ENCODE measurements at regions of chr9 and their contacts with region 1.

Region 1: GRCh38 chr9:127916665-127917613 is at the start of gene ST6GALNAC4:
- DNase-seq: peak; percentile 95
- ATAC-seq: peak; percentile 82
- H3K4me3 ChIP-seq: peak within 1 kb of the TSS; percentile 71 to 99 (median 79)
- H3K4me3 Mint-ChIP-seq: peak within 1 kb of the TSS; percentile 94
- H3K27ac ChIP-seq: peak within 1 kb of the TSS; percentile 89 to 91
- H3K27ac Mint-ChIP-seq: peak within 1 kb of the TSS; percentile 98
- H3K4me1 ChIP-seq: peaks cover 44 to 77% of the 10 kb centered on the region in 2 donors
- H3K4me1 Mint-ChIP-seq: peaks cover 68% of the 10 kb centered on the region
- H3K27me3 ChIP-seq: peaks cover 0 to 2% (median 0%) of the 10 kb centered on the region in 4 experiments
- H3K27me3 Mint-ChIP-seq: no peaks in the 10 kb centered on the region
- CTCF ChIP-seq: no peak
- total RNA-seq, gene ST6GALNAC4: 198 and 199 TPM in 2 replicates

Region 2: DNA sequence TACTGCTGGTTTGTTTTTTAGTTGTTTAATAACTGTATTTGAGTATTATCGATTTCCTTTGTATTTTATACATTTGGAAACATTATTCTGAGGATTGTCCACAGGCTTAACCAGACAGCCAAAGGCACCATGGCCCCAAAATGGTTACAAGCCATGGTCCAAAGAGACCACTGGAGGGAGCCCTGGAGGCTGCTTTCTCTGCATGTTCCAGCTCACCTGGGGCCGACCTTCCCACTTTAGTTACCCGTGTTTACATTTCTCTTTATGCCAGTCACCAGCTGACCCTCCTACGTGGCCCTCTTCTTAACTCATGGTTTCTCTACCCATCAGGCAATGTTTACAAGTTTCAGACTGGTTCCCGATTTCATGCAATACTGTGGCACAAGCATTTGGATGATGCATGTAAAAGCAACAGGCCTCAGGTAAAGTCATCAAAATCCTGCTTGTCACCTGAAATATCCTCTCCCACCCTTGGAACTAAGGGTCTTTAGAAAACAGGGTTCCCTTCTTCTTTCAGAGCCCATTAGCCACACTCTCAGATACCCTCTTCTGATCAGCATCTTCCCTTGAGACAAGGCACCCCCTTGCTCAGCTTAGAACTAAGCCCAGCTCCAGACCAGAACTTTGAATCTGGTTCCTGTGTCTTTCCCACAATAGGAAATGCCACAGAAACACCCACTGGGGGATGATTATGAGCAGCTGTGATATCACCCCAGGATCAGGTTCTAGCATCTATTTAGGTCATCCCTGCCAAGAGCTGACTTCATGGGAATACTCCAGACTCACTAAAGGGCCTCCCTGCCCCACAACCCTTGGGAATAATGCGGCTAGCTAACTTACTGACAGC is 702.3 kb before region 1 on chr9:
- CTCF ChIA-PET with region 1: interaction called, 5 read pairs
- POLR2A ChIA-PET with region 1: no interaction called
- intact Hi-C with region 1: loop called (anchors 5 kb)
- DNase-seq: peak; percentile 73
- ATAC-seq: peak; percentile 85
- H3K4me3 ChIP-seq: no peak overlapping the region
- H3K4me3 Mint-ChIP-seq: no peak overlapping the region
- H3K27ac ChIP-seq: no peak overlapping the region
- H3K27ac Mint-ChIP-seq: no peak overlapping the region
- H3K4me1 ChIP-seq: peaks cover 0 to 3% of the 10 kb centered on the region in 2 donors
- H3K4me1 Mint-ChIP-seq: peaks cover 4% of the 10 kb centered on the region
- H3K27me3 ChIP-seq: no peaks in the 10 kb centered on the region
- H3K27me3 Mint-ChIP-seq: no peaks in the 10 kb centered on the region
- CTCF ChIP-seq: peak; percentile 85

Region 3: GRCh38 chr9:127586537-127586936 is 330.4 kb before region 1 on chr9:
- CTCF ChIA-PET with region 1: interaction called, 80 read pairs
- POLR2A ChIA-PET with region 1: no interaction called
- intact Hi-C with region 1: loop called (anchors 5 kb)
- DNase-seq: peak; percentile 63
- ATAC-seq: peak; percentile 68
- H3K4me3 ChIP-seq: no peak overlapping the region
- H3K4me3 Mint-ChIP-seq: no peak overlapping the region
- H3K27ac ChIP-seq: no peak overlapping the region
- H3K27ac Mint-ChIP-seq: no peak overlapping the region
- H3K4me1 ChIP-seq: no peaks in the 10 kb centered on the region
- H3K4me1 Mint-ChIP-seq: no peaks in the 10 kb centered on the region
- H3K27me3 ChIP-seq: peaks cover 0 to 24% (median 7%) of the 10 kb centered on the region in 4 experiments
- H3K27me3 Mint-ChIP-seq: peaks cover 37% of the 10 kb centered on the region
- CTCF ChIP-seq: peak; percentile 63

Region 4: DNA sequence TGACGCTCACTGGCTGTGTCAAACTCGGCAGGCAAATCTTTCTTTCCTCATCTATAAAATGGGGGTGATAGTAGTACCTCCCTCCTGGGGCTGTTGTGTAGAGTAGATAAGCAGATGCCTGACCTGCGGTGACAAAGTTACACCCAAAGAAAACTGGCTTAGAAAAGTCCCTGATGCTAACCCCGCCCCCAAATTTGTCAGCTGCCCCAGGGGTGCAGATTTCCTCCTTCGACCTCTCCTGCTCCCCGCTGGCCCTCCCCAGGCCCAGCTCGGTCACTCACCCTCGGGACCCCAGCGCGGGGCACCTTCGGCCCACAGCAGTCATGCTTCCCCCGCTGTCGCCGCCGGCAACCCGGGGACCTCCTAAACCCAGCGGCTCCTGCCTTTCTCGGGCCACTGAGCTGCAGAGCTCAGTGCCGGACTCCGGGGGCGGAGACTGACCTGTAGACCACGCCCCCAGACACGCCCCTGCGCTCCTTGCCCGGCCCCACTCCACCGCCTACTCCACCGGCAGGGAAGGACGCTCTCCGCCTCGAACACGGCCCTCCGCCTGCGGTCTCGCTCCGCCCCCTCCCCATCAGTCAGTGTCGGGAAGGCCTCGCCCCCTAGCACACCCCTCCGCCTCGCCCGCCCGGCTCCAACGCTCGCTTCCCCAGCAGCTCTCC is 145.9 kb before region 1 on chr9:
- CTCF ChIA-PET with region 1: interaction called, 8 read pairs
- POLR2A ChIA-PET with region 1: interaction called, 12 read pairs
- intact Hi-C with region 1: loop called (anchors 1 kb)
- DNase-seq: peak; percentile 95
- ATAC-seq: peak; percentile 86
- H3K4me3 ChIP-seq: peak overlapping the region; percentile 43 to 73 (median 64)
- H3K4me3 Mint-ChIP-seq: peak overlapping the region; percentile 94
- H3K27ac ChIP-seq: peak overlapping the region; percentile 77 to 94
- H3K27ac Mint-ChIP-seq: peak overlapping the region; percentile 95
- H3K4me1 ChIP-seq: peaks cover 55 to 90% of the 10 kb centered on the region in 2 donors
- H3K4me1 Mint-ChIP-seq: peaks cover 68% of the 10 kb centered on the region
- H3K27me3 ChIP-seq: no peaks in the 10 kb centered on the region
- H3K27me3 Mint-ChIP-seq: no peaks in the 10 kb centered on the region
- CTCF ChIP-seq: no peak

Region 5: DNA sequence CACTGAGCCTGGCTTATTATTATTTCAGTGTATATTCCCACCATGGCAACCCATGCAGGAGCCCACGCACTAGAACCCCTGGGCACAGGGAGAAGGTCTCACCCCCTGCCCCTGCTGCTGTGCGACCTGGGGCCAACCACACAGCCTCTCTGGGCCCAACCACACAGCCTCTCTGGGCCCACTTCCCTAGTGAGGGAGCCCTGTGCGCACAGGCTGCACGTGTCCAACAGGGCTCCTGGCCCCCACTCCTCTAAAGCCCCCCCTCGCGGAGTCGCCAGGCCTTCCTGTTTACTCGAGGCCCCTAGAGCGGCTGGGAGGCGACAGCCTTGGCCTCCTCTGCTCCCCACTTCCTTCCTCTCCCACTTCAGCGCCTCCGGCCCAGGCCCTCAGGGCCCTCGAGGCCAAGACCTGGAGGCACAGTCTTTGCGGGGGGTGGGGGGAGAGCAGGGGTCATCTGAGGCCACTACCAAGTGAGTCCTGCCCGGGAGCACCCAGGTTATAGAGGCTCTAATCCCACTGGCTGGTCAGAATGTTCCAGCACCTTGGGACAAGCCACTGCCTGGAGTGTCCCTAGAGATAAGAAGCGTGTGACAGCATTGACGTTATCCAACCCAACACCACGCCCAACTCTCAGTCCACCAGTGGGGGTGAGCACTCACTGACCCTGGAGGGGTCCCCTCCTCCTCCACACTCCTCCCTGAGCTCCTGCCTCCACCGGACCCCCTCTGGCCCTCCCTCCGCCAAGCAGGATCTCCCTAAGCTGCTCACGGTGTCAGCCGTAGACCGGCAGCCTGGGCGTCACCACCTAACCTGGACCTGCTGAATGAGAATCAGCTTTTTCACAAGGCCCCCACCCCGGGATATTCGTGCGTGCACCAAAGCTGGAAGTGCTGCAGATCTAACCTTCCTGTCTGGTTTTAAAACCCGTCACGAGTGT is 54.6 kb before region 1 on chr9:
- CTCF ChIA-PET with region 1: interaction called, 237 read pairs
- POLR2A ChIA-PET with region 1: interaction called, 6 read pairs
- intact Hi-C with region 1: loop called (anchors 1 kb)
- DNase-seq: peak; percentile 87
- ATAC-seq: peak; percentile 77
- H3K4me3 ChIP-seq: no peak overlapping the region
- H3K4me3 Mint-ChIP-seq: peak overlapping the region; percentile 78
- H3K27ac ChIP-seq: peak overlapping the region; percentile 90 to 92
- H3K27ac Mint-ChIP-seq: peak overlapping the region; percentile 99
- H3K4me1 ChIP-seq: peaks cover 59 to 78% of the 10 kb centered on the region in 2 donors
- H3K4me1 Mint-ChIP-seq: peaks cover 64% of the 10 kb centered on the region
- H3K27me3 ChIP-seq: no peaks in the 10 kb centered on the region
- H3K27me3 Mint-ChIP-seq: no peaks in the 10 kb centered on the region
- CTCF ChIP-seq: no peak

Region 6: DNA sequence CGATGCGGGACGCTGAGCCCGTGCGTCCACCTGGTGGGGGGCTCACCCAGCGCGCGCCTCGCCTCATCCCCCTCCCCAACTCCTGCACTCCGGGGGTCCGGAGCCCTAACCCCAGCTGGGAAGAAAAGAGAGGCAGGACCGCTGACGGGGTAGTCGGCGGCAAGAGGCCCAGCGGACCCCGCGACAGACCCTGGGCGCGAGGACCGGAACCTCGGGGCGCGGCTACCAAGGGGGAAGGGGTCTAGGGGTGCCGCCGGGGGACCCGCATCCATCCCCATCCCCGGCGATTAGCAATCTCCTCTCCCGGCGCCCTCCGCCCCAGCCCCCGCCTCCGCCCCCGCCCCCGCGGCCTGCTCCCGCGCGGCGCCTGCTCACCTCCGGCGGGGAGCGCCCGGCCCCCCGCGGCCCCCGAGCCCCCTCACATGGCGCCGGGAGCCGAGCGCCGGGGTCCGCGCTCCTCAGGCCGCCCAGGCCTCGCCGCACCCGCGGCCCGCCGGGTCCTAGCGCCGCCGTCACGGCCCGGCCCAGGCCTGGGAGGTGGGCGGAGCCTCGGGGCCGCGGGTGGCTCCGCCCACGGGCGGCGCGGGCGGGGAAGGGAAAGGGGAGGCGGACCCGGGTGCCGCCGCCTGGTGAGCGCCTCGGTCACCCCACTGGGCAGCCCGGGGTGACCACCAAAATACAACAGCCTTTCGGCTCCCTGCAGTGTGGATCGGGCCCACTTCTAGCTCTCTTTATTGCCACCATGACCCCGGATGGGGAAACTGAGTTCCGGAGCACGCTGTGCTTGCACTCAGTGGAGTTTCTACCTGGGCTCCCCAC is 17.6 kb before region 1 on chr9 and contains the start of gene ST6GALNAC6:
- CTCF ChIA-PET with region 1: interaction called, 81 read pairs
- POLR2A ChIA-PET with region 1: interaction called, 228 read pairs
- intact Hi-C with region 1: loop called (anchors 1 kb)
- DNase-seq: peak; percentile 82
- ATAC-seq: peak; percentile 81
- H3K4me3 ChIP-seq: peak within 1 kb of the TSS; percentile 61 to 83 (median 82)
- H3K4me3 Mint-ChIP-seq: peak within 1 kb of the TSS; percentile 90
- H3K27ac ChIP-seq: peak within 1 kb of the TSS; percentile 56 to 66
- H3K27ac Mint-ChIP-seq: peak within 1 kb of the TSS; percentile 88
- H3K4me1 ChIP-seq: peaks cover 41 to 69% of the 10 kb centered on the region in 2 donors
- H3K4me1 Mint-ChIP-seq: peaks cover 51% of the 10 kb centered on the region
- H3K27me3 ChIP-seq: no peaks in the 10 kb centered on the region
- H3K27me3 Mint-ChIP-seq: no peaks in the 10 kb centered on the region
- CTCF ChIP-seq: no peak
- total RNA-seq, gene ST6GALNAC6: 126 and 136 TPM in 2 replicates

Region 7: DNA sequence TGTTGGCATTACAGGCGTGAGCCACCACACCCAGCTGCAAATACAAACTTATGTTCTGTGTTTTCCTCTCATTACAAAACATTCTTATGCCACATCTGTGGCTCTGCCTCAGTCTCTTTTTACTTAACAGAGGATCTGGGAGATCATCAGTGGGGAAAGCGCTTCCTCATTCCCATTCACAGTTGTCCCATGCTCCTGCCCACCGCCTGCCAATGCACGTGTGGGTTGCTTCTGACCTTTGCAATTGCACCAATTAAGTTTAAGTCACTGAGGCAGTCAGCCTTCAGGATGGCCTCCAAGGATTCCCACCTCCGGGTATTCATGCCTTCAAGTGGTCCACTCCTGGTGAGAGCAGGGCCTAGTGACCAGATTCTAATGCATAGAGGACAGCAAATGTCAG is 98.8 kb after region 1 on chr9:
- CTCF ChIA-PET with region 1: no interaction called
- POLR2A ChIA-PET with region 1: no interaction called
- intact Hi-C with region 1: no loop called
- DNase-seq: no peak
- ATAC-seq: no peak
- H3K4me3 ChIP-seq: no peak overlapping the region
- H3K4me3 Mint-ChIP-seq: no peak overlapping the region
- H3K27ac ChIP-seq: no peak overlapping the region
- H3K27ac Mint-ChIP-seq: no peak overlapping the region
- H3K4me1 ChIP-seq: peaks cover 11 to 18% of the 10 kb centered on the region in 2 donors
- H3K4me1 Mint-ChIP-seq: peaks cover 18% of the 10 kb centered on the region
- H3K27me3 ChIP-seq: no peaks in the 10 kb centered on the region
- H3K27me3 Mint-ChIP-seq: no peaks in the 10 kb centered on the region
- CTCF ChIP-seq: no peak